Activated T-helper 1 cell treated with anti-CD3 and anti-CD28 coated beads, Interleukin-12 subunit alpha, Interleukin-12 subunit beta, Interleukin-2, Interleukin-4 antibody, amounts not matched to agents 30 ng/mL and 10 ng/mL and 1 ng/mL, durations not matched to agents 14 hours and 24 hours and 36 hours (primary cell): ENCODE measurements at regions of chr18 and their contacts with region 1.

Region 1: DNA sequence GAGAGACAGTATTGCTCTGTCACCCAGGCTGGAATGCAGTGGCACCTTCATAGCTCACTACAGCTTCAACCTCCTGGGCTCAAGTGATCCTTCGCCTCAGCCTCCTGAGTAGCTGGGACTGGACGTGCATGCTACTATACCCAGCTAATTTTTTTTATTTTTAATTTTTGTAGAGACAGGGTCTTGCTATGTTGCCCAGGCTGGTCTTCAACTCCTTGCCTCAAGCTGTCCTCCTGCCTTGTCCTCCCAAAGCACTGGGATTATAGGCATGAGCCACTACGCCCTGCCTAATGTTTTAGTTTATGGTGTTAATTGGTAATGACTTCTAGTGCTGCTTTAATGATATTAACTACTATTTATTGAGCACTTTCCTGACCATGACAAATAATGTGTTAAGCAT is 18.3 kb downstream of the RNF138 start:
- DNase-seq: no peak
- H3K4me3 Mint-ChIP-seq: no peak overlapping the region
- H3K27ac Mint-ChIP-seq: no peak overlapping the region
- H3K4me1 Mint-ChIP-seq: peaks cover 45% of the 10 kb centered on the region
- H3K27me3 Mint-ChIP-seq: no peaks in the 10 kb centered on the region

Region 2: DNA sequence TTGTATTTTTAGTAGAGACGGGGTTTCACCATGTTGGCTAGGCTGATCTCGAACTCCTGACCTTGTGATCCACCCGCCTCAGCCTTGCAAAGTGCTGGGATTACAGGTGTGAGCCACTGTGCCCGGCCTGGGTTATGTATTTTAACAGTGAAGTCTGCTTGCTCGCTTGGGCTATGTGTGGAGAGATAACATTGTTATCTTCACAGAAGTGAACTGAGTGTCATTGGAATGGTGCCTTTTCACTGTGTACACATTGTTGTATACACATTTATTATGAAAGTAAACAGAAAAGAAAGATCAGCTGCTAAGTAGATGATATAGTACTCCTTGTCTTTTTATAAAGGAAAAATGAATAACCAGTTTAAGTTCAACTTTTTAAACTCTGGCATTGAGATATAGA is 12.0 kb after region 1 on chr18:
- intact Hi-C with region 1: loop called (anchors 2 kb)
- DNase-seq: no peak
- H3K4me3 Mint-ChIP-seq: no peak overlapping the region
- H3K27ac Mint-ChIP-seq: no peak overlapping the region
- H3K4me1 Mint-ChIP-seq: peaks cover 16% of the 10 kb centered on the region
- H3K27me3 Mint-ChIP-seq: no peaks in the 10 kb centered on the region